ENCODE measurements at regions of chr16 and their contacts with region 1.

Region 1: DNA sequence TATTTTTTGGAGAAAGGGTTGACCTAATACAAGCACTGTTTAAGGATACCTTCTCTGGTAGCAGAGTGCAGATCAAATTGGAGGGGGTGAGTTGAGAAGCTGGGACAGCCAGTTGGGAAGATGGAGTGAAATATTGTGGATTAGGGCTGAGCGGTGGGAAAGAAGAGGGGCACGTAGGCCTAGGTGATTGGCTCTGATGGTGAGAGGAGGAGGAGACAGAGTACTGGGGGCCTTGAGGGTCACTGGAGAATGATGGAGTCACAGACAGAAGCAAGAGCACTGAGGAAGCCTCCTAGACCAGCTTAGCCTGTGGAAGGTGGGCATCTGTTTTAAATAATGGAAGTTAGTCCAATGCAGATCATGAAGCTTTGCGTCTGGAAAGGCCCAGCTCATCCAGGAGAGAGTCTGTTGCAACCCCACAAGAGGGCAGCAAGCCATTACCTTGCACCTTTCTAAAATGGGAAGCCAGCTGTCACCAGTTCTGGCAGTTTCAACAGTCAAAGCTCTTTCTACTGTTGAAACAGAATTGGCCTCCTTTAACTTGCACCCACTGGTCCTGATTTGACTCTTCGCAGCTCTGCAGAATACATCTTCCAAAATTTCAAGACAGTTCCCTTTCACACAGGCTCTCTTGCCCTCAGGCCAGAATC is 11.8 kb downstream of the SLC9A5 start:
- DNase-seq: no peak
- H3K4me3 ChIP-seq: no peak overlapping the region
- H3K27me3 ChIP-seq: no peaks in the 10 kb centered on the region
- CTCF ChIP-seq: peak; percentile 73

Region 2: GRCh38 chr16:67246934-67247697 is 13.4 kb before region 1 on chr16 and contains the start of gene FHOD1:
- CTCF ChIA-PET with region 1: interaction called, 24 read pairs
- POLR2A ChIA-PET with region 1: no interaction called
- DNase-seq: peak; percentile 70
- H3K4me3 ChIP-seq: peak within 1 kb of the TSS; percentile 83
- H3K27me3 ChIP-seq: no peaks in the 10 kb centered on the region
- CTCF ChIP-seq: no peak
- polyA plus RNA-seq, gene FHOD1: 13.2 and 23.0 TPM in 2 replicates

Region 3: GRCh38 chr16:67279296-67280089 is 18.9 kb after region 1 on chr16 and contains the start of gene PLEKHG4:
- CTCF ChIA-PET with region 1: interaction called, 29 read pairs
- POLR2A ChIA-PET with region 1: interaction called, 3 read pairs
- DNase-seq: no peak
- H3K4me3 ChIP-seq: peak within 1 kb of the TSS; percentile 53
- H3K27me3 ChIP-seq: no peaks in the 10 kb centered on the region
- CTCF ChIP-seq: peak; percentile 36
- polyA plus RNA-seq, gene PLEKHG4: 12.1 and 25.2 TPM in 2 replicates

Region 4: GRCh38 chr16:67284699-67285646 is 24.4 kb after region 1 on chr16:
- CTCF ChIA-PET with region 1: interaction called, 29 read pairs
- POLR2A ChIA-PET with region 1: no interaction called
- DNase-seq: no peak
- H3K4me3 ChIP-seq: no peak overlapping the region
- H3K27me3 ChIP-seq: no peaks in the 10 kb centered on the region
- CTCF ChIP-seq: peak; percentile 55

Region 5: DNA sequence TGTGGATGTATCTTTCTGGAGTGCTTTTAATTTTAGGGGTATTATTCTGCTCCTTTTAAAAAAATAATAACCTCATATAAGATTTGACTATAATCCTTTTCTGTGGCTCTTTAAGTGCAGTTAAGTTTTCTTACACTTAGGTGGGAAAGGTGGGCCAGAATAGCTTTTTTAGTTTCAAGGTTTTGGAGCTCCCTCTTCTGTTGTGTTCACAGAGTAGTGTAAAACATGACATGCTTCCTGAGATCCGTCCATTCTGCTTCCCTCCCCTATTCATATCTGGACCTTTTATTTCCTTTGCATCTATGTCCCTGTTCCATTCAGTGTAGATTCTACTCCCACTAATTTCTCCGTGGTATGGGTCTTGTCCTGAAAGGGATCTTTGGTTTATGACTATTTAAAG is 78.9 kb after region 1 on chr16:
- CTCF ChIA-PET with region 1: interaction called, 56 read pairs
- POLR2A ChIA-PET with region 1: no interaction called
- DNase-seq: no peak
- H3K4me3 ChIP-seq: no peak overlapping the region
- H3K27me3 ChIP-seq: no peaks in the 10 kb centered on the region
- CTCF ChIP-seq: peak; percentile 31

Region 6: GRCh38 chr16:67415872-67416793 is 155.6 kb after region 1 on chr16 and contains the start of gene ZDHHC1:
- CTCF ChIA-PET with region 1: interaction called, 12 read pairs
- POLR2A ChIA-PET with region 1: no interaction called
- DNase-seq: no peak
- H3K4me3 ChIP-seq: peak within 1 kb of the TSS; percentile 77
- H3K27me3 ChIP-seq: no peaks in the 10 kb centered on the region; the same call in 1 of the 2 replicates
- CTCF ChIP-seq: 0 out of 2 replicates have a peak, but pooled peaks have one; percentile 27
- polyA plus RNA-seq, gene ZDHHC1: 3.5 and 7.4 TPM in 2 replicates